Left lung (tissue), 14 donors: ENCODE measurements at regions of chr5 and their contacts with region 1.

Region 1: GRCh38 chr5:158695595-158696330 is 404.0 kb downstream of the EBF1 start:
- DNase-seq: peak; percentile 63 to 91 (median 81)
- ATAC-seq: peak; percentile 98
- H3K4me3 ChIP-seq: no peak overlapping the region
- H3K27ac ChIP-seq: no peak overlapping the region
- H3K4me1 ChIP-seq: no peaks in the 10 kb centered on the region
- H3K27me3 ChIP-seq: no peaks in the 10 kb centered on the region
- CTCF ChIP-seq: peak; percentile 90 to 98

Region 2: GRCh38 chr5:159100025-159100781 is 404.4 kb after region 1 on chr5:
- intact Hi-C with region 1: loop called (anchors 5 to 10 kb)
- DNase-seq: peak; percentile 88 to 95 (median 93)
- ATAC-seq: peak; percentile 93
- H3K4me3 ChIP-seq: peak overlapping the region; percentile 40 to 42
- H3K27ac ChIP-seq: peak overlapping the region; percentile 26 to 69
- H3K4me1 ChIP-seq: peaks cover 6 to 40% of the 10 kb centered on the region in 2 donors
- H3K27me3 ChIP-seq: peaks cover 65 to 100% of the 10 kb centered on the region in 2 donors
- CTCF ChIP-seq: no peak

Region 3: DNA sequence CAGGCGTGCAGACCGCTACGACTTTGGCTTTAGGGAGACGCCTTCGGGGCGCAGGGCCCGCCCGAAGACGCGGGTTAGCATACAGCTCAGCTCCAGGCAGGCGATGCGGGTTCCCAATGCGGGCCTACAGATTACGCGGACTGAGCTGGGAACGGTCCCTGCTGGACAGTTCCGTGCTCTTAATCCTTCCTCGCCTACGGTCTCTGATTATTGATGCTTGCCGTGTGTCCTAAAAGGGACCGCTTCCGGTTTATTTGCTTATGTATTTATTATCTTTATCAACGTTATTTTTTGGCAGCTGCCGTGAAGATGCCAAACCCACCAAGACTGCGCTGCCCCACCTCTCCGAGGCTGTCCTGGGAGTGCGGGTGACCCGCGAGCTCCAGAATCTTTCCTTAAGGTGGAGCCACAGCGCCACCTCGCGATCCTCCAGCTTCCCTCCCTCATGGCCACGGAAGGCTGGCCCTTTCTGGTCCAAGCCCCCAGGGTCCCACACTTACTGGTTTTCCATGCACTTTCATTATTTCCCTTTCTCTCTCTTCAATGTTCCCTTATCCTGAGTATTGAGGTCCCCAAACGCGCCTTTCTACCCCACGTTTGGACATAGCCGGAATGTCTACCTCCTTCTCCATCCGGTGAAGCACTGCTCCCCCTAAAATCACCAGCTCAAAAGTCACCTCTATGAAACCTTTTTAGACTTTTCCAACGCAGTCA is 411.0 kb after region 1 on chr5:
- intact Hi-C with region 1: loop called (anchors 5 to 10 kb)
- DNase-seq: peak; percentile 68 to 89 (median 80)
- ATAC-seq: peak; percentile 93
- H3K4me3 ChIP-seq: peak overlapping the region in 1 of 2 donors; percentile 20
- H3K27ac ChIP-seq: no peak overlapping the region
- H3K4me1 ChIP-seq: peaks cover 9 to 13% of the 10 kb centered on the region in 2 donors
- H3K27me3 ChIP-seq: peaks cover 52 to 93% of the 10 kb centered on the region in 2 donors
- CTCF ChIP-seq: peak; percentile 85 to 89